Panc1 (cell line): ENCODE measurements at regions of chr7 and their contacts with region 1.

Region 1: GRCh38 chr7:36360244-36360643 is 29.4 kb upstream of the ANLN start:
- DNase-seq: no peak
- ATAC-seq: no peak
- H3K4me3 ChIP-seq: no peak overlapping the region
- H3K27ac ChIP-seq: peak overlapping the region; percentile 32; the same call in 1 of the 2 replicates
- H3K4me1 ChIP-seq: peaks cover 23% of the 10 kb centered on the region
- H3K27me3 ChIP-seq: no peaks in the 10 kb centered on the region
- CTCF ChIP-seq: no peak

Region 2: DNA sequence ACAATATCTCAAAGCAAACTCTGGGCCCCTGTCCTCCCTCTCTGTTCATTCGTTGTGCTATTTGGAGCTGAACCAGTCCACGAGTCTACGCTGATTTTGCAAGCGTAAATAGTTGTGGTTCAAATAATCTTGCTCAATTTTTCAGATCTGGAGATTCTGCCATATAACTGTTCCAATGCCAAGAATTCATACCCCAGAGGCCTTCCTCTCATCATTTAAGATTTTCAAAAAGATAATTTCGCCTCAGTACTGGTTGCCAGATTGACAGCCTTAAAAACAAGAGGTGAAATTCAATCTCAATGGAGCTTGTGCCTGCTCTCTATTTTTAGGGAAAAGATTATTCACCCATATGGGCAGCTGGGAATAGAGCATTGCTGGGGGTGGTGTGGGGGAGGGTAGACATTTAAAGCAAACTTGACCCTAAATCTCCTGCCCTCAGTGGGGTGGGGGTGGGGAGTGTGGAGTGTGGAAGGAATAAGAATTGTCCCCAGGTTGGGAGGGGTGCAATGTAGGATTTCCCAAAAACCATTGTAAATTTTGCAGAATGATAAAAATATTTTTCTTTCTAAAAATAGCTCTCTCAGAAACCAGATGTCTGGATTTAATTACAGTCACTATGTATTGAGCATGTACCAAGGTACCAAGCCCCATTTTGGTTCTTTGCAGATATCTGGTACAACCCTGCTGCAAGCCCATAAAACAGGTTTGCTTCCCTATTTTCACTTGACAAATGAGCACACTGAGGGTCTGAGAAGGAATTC is 311.9 kb before region 1 on chr7:
- CTCF ChIA-PET with region 1: interaction called, 12 read pairs
- POLR2A ChIA-PET with region 1: no interaction called
- in situ Hi-C with region 1: no loop called
- intact Hi-C with region 1: no loop called
- DNase-seq: no peak
- ATAC-seq: peak; percentile 49; the same call in 1 of the 2 replicates
- H3K4me3 ChIP-seq: no peak overlapping the region
- H3K27ac ChIP-seq: peak overlapping the region; percentile 36
- H3K4me1 ChIP-seq: peaks cover 14% of the 10 kb centered on the region
- H3K27me3 ChIP-seq: no peaks in the 10 kb centered on the region
- CTCF ChIP-seq: no peak

Region 3: DNA sequence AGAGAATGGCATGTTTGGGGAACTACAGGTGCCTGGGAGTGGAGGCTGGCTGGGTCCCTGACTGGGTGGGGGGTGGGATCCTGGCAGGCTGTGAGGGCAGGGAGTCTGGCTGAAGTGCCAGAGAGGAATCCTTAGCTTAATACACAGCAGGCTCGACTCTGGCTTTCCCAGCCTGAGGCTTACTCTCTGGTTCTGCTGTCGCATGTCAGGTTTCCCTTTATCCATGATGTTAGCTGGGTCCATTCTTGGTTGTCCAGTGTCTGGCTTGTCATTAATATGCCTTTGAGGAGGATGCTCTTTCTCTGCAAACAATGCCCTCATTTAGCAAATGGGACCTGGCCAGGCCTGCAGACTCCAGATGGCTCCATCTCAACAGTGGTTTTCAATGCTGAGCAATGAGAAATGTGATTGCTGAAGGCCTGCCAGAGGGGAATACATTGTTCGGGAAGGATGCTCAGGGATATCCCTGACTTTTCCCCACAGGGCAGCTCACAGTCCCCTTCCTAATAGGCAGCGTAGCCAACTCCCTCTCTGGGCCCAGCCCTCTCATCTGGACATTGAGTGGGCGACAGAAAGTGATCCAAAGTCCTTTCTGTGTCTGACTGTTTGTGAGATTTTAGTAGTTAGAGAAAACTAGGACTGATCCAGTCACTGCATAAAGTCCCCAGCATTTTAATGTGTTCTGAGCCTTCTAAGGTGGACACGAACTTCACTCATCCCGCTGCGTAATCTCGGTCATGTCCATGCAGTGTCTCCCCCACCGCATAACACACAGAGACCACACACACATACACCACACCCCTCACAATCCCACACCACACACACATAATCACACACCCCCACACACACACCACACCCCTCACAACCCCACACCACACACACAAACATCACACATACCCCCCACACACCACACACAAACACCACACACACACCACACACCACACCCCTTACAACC is 154.3 kb after region 1 on chr7:
- CTCF ChIA-PET with region 1: no interaction called
- POLR2A ChIA-PET with region 1: no interaction called
- in situ Hi-C with region 1: no loop called
- intact Hi-C with region 1: no loop called
- DNase-seq: no peak
- ATAC-seq: peak; percentile 66
- H3K4me3 ChIP-seq: no peak overlapping the region
- H3K27ac ChIP-seq: peak overlapping the region; percentile 1; the same call in 1 of the 2 replicates
- H3K4me1 ChIP-seq: peaks cover 6% of the 10 kb centered on the region
- H3K27me3 ChIP-seq: no peaks in the 10 kb centered on the region
- CTCF ChIP-seq: no peak